Breast epithelium (tissue), 4 donors: ENCODE measurements at regions of chr20 and their contacts with region 1.

Region 1: DNA sequence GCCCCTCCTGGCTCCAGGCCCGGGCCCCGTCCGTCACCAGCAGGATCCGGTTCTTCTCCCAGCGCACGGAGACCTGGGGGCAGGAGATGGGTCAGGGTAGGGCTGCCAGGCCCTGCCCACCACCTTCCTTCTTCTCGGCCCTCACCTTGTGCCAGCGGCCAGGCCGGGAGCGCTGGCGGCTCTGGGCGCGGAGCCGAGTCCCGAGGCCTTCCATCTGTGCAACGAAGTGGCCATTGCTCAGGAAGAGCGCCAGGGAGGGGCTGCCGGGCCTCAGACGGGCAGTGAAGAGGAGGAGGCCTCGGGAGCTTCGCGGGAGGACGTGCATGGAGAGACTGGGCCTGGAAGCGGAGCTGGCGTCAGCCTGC is 7.9 kb downstream of the ADRM1 start:
- DNase-seq: no peak
- H3K4me3 ChIP-seq: no peak overlapping the region
- H3K27ac ChIP-seq: peak overlapping the region in 1 of 2 donors; percentile 3
- H3K4me1 ChIP-seq: no peaks in the 10 kb centered on the region
- H3K27me3 ChIP-seq: no peaks in the 10 kb centered on the region
- CTCF ChIP-seq: no peak
- POLR2A ChIP-seq: no peak

Region 2: DNA sequence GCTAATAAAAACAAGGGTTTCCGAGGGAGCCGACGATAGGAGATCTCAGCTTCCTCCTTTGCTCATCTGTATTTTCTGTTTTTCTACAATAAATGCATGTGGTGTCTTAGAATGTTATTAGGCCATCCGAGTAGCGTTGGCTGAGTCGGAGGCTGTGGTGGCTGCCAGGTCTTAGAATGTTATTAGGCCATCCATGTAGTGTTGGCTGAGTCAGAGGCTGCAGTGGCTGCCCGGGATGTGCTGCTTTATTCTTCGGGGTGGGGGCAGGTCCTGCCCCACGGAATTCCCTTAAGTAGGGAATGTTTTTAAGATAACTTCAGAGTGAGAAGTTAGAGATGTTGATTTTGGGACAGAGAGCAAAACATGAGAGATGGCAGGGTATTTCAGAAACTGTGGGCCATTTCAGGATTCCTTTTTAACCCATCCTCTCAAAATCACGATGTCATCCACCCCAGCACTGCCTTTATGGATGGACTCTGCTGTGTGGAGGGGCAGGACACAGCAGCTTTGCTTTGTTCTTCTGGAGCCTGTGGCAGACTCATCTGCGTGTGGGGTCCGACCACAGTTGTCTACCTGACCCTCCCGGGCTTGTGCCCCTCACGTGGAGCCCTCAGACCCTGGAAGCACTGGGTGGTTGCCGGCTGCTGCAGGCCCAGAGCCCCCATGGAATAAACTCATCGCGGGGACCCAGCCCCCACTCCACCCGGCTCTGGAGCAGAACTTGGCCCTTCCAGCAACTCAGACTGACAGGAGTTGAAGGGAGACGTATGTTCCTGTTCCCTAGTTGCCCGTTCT is 52.0 kb before region 1 on chr20:
- intact Hi-C with region 1: no loop called
- DNase-seq: no peak
- H3K4me3 ChIP-seq: no peak overlapping the region
- H3K27ac ChIP-seq: peak overlapping the region in 1 of 2 donors; percentile 38
- H3K4me1 ChIP-seq: no peaks in the 10 kb centered on the region
- H3K27me3 ChIP-seq: no peaks in the 10 kb centered on the region
- CTCF ChIP-seq: no peak
- POLR2A ChIP-seq: no peak

Region 3: GRCh38 chr20:62376112-62377063 is 65.6 kb after region 1 on chr20:
- intact Hi-C with region 1: loop called (anchors 5 kb)
- DNase-seq: no peak
- H3K4me3 ChIP-seq: no peak overlapping the region
- H3K27ac ChIP-seq: peak overlapping the region; percentile 65 to 84
- H3K4me1 ChIP-seq: peaks cover 0 to 11% of the 10 kb centered on the region in 2 donors
- H3K27me3 ChIP-seq: no peaks in the 10 kb centered on the region
- CTCF ChIP-seq: peak in 2 of 3 donors; percentile 20 to 21
- POLR2A ChIP-seq: no peak

Region 4: DNA sequence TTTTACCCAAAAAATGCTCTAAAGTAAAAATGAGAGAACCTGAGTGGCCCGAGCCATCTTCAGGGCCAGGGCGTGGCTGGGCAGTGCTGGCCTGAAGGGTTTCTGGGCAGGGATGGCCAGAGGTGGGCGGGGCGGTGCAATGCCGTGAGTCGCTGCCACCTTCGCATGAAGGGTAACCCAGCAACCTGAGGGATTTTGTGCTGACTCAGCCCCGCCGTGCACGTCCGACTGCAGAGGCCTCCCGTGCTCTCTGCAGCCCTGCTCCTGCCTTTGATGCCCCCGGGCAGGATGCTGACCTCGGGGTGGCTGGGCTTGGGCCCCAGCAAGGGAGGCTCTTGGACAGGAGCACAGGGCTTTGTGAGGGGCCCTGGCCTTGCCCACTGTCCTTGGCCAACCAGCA is 246.7 kb after region 1 on chr20:
- intact Hi-C with region 1: no loop called
- DNase-seq: no peak
- H3K4me3 ChIP-seq: no peak overlapping the region
- H3K27ac ChIP-seq: no peak overlapping the region
- H3K4me1 ChIP-seq: no peaks in the 10 kb centered on the region
- H3K27me3 ChIP-seq: peaks cover 7 to 97% of the 10 kb centered on the region in 2 donors
- CTCF ChIP-seq: no peak
- POLR2A ChIP-seq: no peak

Region 5: GRCh38 chr20:62652051-62652926 is 341.6 kb after region 1 on chr20:
- intact Hi-C with region 1: no loop called
- DNase-seq: peak; percentile 89 to 94
- H3K4me3 ChIP-seq: peak overlapping the region; percentile 17 to 60 (median 40)
- H3K27ac ChIP-seq: peak overlapping the region; percentile 96 to 98
- H3K4me1 ChIP-seq: peaks cover 7 to 9% of the 10 kb centered on the region in 2 donors
- H3K27me3 ChIP-seq: no peaks in the 10 kb centered on the region
- CTCF ChIP-seq: peak in 2 of 3 donors; percentile 25 to 37
- POLR2A ChIP-seq: peak; percentile 18